Lower leg skin (tissue), 4 donors: ENCODE measurements at regions of chr1 and their contacts with region 1.

Region 1: GRCh38 chr1:235455823-235456222 is 48.4 kb downstream of the B3GALNT2 start:
- DNase-seq: no peak
- H3K4me3 ChIP-seq: no peak overlapping the region
- CTCF ChIP-seq: no peak
- POLR2A ChIP-seq: no peak

Region 2: GRCh38 chr1:235424092-235424491 is 31.7 kb before region 1 on chr1:
- intact Hi-C with region 1: loop called (anchors 1 kb)
- DNase-seq: peak in 1 of 2 donors; percentile 48
- H3K4me3 ChIP-seq: no peak overlapping the region
- CTCF ChIP-seq: no peak
- POLR2A ChIP-seq: no peak

Region 3: GRCh38 chr1:235441159-235441685 is 14.6 kb before region 1 on chr1:
- intact Hi-C with region 1: no loop called
- DNase-seq: no peak
- H3K4me3 ChIP-seq: no peak overlapping the region
- CTCF ChIP-seq: no peak
- POLR2A ChIP-seq: no peak